Dorsolateral prefrontal cortex (tissue), 120 donors: ENCODE measurements at regions of chr3 and their contacts with region 1.

Region 1: GRCh38 chr3:161274719-161275298 is 53.7 kb downstream of the NMD3 start:
- DNase-seq: no peak
- H3K4me3 ChIP-seq: no peak overlapping the region
- H3K27ac ChIP-seq: no peak overlapping the region
- H3K27me3 ChIP-seq: no peaks in the 10 kb centered on the region
- CTCF ChIP-seq: peak; percentile 22 to 69 (median 56)

Region 2: DNA sequence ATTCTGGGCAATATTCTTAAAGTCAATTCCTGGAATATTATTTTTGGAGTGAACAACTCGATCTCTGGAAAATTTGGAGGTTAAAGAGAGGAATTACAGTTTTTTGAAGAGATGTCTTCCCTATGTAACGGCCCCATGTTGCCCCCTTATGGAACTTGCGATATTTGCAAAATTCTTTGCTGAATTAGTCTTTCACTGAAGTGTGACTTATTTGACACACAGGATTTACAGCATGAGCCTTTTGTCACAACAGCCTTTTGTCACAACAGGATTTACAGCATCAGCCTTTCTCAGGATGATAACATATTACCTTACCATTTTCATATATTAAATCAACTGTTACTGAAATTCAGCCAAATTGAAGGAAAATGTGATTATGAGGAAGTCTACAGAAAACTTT is 134.3 kb after region 1 on chr3:
- intact Hi-C with region 1: loop called (anchors 5 kb)
- DNase-seq: peak in 1 of 10 donors; percentile 20
- H3K4me3 ChIP-seq: no peak overlapping the region
- H3K27ac ChIP-seq: no peak overlapping the region
- H3K27me3 ChIP-seq: no peaks in the 10 kb centered on the region
- CTCF ChIP-seq: peak; percentile 36 to 72 (median 58)

Region 3: GRCh38 chr3:161423911-161424522 is 149.2 kb after region 1 on chr3:
- intact Hi-C with region 1: loop called in 1 of 2 experiments (anchors 2 kb)
- DNase-seq: no peak
- H3K4me3 ChIP-seq: no peak overlapping the region
- H3K27ac ChIP-seq: no peak overlapping the region
- H3K27me3 ChIP-seq: no peaks in the 10 kb centered on the region
- CTCF ChIP-seq: peak; percentile 76 to 99 (median 90)